Naive thymus-derived CD4-positive, alpha-beta T cell (primary cell): ENCODE measurements at regions of chr3 and their contacts with region 1.

Region 1: DNA sequence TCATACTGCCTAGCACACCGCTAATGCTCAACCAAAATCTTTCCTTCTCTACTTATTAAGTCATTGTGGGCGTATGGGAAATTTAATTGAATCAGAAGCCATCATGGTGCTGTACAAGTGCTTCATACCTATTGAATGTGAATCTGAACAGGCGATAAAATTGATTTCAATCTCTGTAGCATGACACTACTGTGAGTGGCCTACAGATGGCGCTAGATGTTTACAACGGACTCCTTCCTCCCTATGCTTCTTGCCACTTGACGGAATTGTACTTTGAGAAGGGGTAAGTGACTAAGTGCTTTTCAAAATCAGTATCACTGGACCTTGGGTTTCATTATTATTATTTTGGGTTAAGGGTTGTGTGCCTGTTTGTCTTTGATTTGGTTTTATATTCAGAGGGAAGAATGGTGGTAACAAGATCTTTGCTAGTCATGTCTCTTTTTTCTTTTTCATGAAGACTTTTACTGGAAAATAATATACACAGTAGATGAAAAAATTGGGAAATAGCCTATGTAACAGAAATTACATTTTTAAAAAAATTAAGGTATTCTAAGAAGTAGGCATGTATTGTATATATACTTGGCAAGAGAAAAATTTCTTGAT is 35.4 kb downstream of the ACP3 start:
- DNase-seq: peak; percentile 11 to 65 (median 52)
- ATAC-seq: peak; percentile 91
- H3K4me3 ChIP-seq: no peak overlapping the region
- H3K4me3 Mint-ChIP-seq: no peak overlapping the region
- H3K27ac ChIP-seq: no peak overlapping the region
- H3K27ac Mint-ChIP-seq: no peak overlapping the region
- H3K4me1 ChIP-seq: no peaks in the 10 kb centered on the region
- H3K4me1 Mint-ChIP-seq: peaks cover 0 to 4% (median 0%) of the 10 kb centered on the region in 7 donors
- H3K27me3 ChIP-seq: peaks cover 0 to 3% of the 10 kb centered on the region in 2 donors
- H3K27me3 Mint-ChIP-seq: peaks cover 0 to 18% (median 0%) of the 10 kb centered on the region in 5 donors

Region 2: GRCh38 chr3:132317229-132317948 is 35.3 kb before region 1 on chr3 and contains the start of gene ACP3:
- CTCF ChIA-PET with region 1: no interaction called
- POLR2A ChIA-PET with region 1: no interaction called
- intact Hi-C with region 1: no loop called
- DNase-seq: no peak
- ATAC-seq: peak; percentile 84
- H3K4me3 ChIP-seq: no peak within 1 kb of the TSS
- H3K4me3 Mint-ChIP-seq: no peak within 1 kb of the TSS
- H3K27ac ChIP-seq: no peak within 1 kb of the TSS
- H3K27ac Mint-ChIP-seq: peak within 1 kb of the TSS in 1 of 9 donors; percentile 51
- H3K4me1 ChIP-seq: no peaks in the 10 kb centered on the region
- H3K4me1 Mint-ChIP-seq: peaks cover 0 to 4% (median 0%) of the 10 kb centered on the region in 7 donors
- H3K27me3 ChIP-seq: no peaks in the 10 kb centered on the region
- H3K27me3 Mint-ChIP-seq: peaks cover 5 to 30% (median 11%) of the 10 kb centered on the region in 5 donors
- total RNA-seq, gene ACP3: 0.32 to 19.0 (median 1.9) TPM in 3 of 5 experiments, not detected in the others

Region 3: GRCh38 chr3:132399054-132399929 is 46.6 kb after region 1 on chr3:
- CTCF ChIA-PET with region 1: interaction called, 4 read pairs
- POLR2A ChIA-PET with region 1: no interaction called
- intact Hi-C with region 1: loop called (anchors 1 kb)
- DNase-seq: peak in 5 of 9 donors; percentile 11 to 36 (median 19)
- ATAC-seq: peak; percentile 65
- H3K4me3 ChIP-seq: no peak overlapping the region
- H3K4me3 Mint-ChIP-seq: no peak overlapping the region
- H3K27ac ChIP-seq: no peak overlapping the region
- H3K27ac Mint-ChIP-seq: no peak overlapping the region
- H3K4me1 ChIP-seq: no peaks in the 10 kb centered on the region
- H3K4me1 Mint-ChIP-seq: no peaks in the 10 kb centered on the region
- H3K27me3 ChIP-seq: no peaks in the 10 kb centered on the region
- H3K27me3 Mint-ChIP-seq: peaks cover 0 to 25% (median 0%) of the 10 kb centered on the region in 5 donors

Region 4: GRCh38 chr3:132499071-132499470 is 146.4 kb after region 1 on chr3:
- CTCF ChIA-PET with region 1: no interaction called
- POLR2A ChIA-PET with region 1: no interaction called
- intact Hi-C with region 1: loop called in 1 of 2 experiments (anchors 5 kb)
- DNase-seq: no peak
- ATAC-seq: no peak
- H3K4me3 ChIP-seq: no peak overlapping the region
- H3K4me3 Mint-ChIP-seq: no peak overlapping the region
- H3K27ac ChIP-seq: no peak overlapping the region
- H3K27ac Mint-ChIP-seq: no peak overlapping the region
- H3K4me1 ChIP-seq: no peaks in the 10 kb centered on the region
- H3K4me1 Mint-ChIP-seq: peaks cover 0 to 2% (median 0%) of the 10 kb centered on the region in 7 donors
- H3K27me3 ChIP-seq: no peaks in the 10 kb centered on the region
- H3K27me3 Mint-ChIP-seq: no peaks in the 10 kb centered on the region

Region 5: GRCh38 chr3:132535575-132536441 is 183.2 kb after region 1 on chr3:
- CTCF ChIA-PET with region 1: no interaction called
- POLR2A ChIA-PET with region 1: no interaction called
- intact Hi-C with region 1: loop called (anchors 1 to 10 kb)
- DNase-seq: peak in 8 of 9 donors; percentile 6 to 47 (median 32)
- ATAC-seq: peak; percentile 65
- H3K4me3 ChIP-seq: no peak overlapping the region
- H3K4me3 Mint-ChIP-seq: no peak overlapping the region
- H3K27ac ChIP-seq: no peak overlapping the region
- H3K27ac Mint-ChIP-seq: peak overlapping the region in 1 of 9 donors; percentile 13
- H3K4me1 ChIP-seq: no peaks in the 10 kb centered on the region
- H3K4me1 Mint-ChIP-seq: peaks cover 0 to 10% (median 0%) of the 10 kb centered on the region in 7 donors
- H3K27me3 ChIP-seq: no peaks in the 10 kb centered on the region
- H3K27me3 Mint-ChIP-seq: no peaks in the 10 kb centered on the region

Region 6: GRCh38 chr3:132641837-132642538 is 289.3 kb after region 1 on chr3:
- CTCF ChIA-PET with region 1: interaction called, 10 read pairs
- POLR2A ChIA-PET with region 1: no interaction called
- intact Hi-C with region 1: loop called (anchors 1 kb)
- DNase-seq: peak in 5 of 9 donors; percentile 17 to 45 (median 36)
- ATAC-seq: peak; percentile 67
- H3K4me3 ChIP-seq: no peak overlapping the region
- H3K4me3 Mint-ChIP-seq: no peak overlapping the region
- H3K27ac ChIP-seq: no peak overlapping the region
- H3K27ac Mint-ChIP-seq: no peak overlapping the region
- H3K4me1 ChIP-seq: no peaks in the 10 kb centered on the region
- H3K4me1 Mint-ChIP-seq: peaks cover 0 to 11% (median 3%) of the 10 kb centered on the region in 7 donors
- H3K27me3 ChIP-seq: no peaks in the 10 kb centered on the region
- H3K27me3 Mint-ChIP-seq: no peaks in the 10 kb centered on the region

Region 7: DNA sequence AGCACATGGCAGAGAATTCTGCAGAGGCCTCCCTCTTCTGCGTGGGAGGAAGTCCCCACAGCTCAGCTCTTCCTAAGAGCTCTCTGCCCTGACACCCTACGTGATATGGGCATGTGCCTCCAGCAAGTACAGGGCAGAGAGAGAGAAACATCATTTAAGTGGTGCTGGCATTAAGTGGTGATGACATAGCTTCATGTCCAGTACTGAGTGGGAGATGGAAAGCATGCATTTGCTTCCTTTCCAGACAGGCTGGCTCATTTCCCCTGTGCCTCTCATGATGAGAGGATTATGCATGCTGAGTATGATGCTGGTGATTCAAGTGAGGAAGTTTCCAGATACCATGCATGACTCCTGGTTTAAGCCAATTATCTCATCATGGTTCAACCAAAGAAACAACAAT is 1074.1 kb after region 1 on chr3:
- CTCF ChIA-PET with region 1: no interaction called
- POLR2A ChIA-PET with region 1: no interaction called
- intact Hi-C with region 1: loop called in 1 of 2 experiments (anchors 5 kb)
- DNase-seq: no peak
- ATAC-seq: no peak
- H3K4me3 ChIP-seq: no peak overlapping the region
- H3K4me3 Mint-ChIP-seq: no peak overlapping the region
- H3K27ac ChIP-seq: no peak overlapping the region
- H3K27ac Mint-ChIP-seq: peak overlapping the region in 1 of 9 donors; percentile 8
- H3K4me1 ChIP-seq: peaks cover 0 to 3% of the 10 kb centered on the region in 2 donors
- H3K4me1 Mint-ChIP-seq: peaks cover 0 to 4% (median 0%) of the 10 kb centered on the region in 7 donors
- H3K27me3 ChIP-seq: no peaks in the 10 kb centered on the region
- H3K27me3 Mint-ChIP-seq: peaks cover 0 to 7% (median 0%) of the 10 kb centered on the region in 5 donors